Left lung (tissue), 14 donors: ENCODE measurements at regions of chr6 and their contacts with region 1.

Region 1: GRCh38 chr6:42043787-42044475 is 6.4 kb upstream of the TAF8 start:
- DNase-seq: peak; percentile 77 to 94 (median 90)
- ATAC-seq: peak; percentile 77
- H3K4me3 ChIP-seq: peak overlapping the region in 1 of 2 donors; percentile 21
- H3K27ac ChIP-seq: peak overlapping the region; percentile 91 to 96
- H3K4me1 ChIP-seq: peaks cover 50 to 90% of the 10 kb centered on the region in 2 donors
- H3K27me3 ChIP-seq: no peaks in the 10 kb centered on the region
- CTCF ChIP-seq: peak; percentile 95 to 97

Region 2: GRCh38 chr6:41779793-41780545 is 264.0 kb before region 1 on chr6 and contains the start of gene FRS3:
- intact Hi-C with region 1: loop called in 1 of 2 experiments (anchors 5 kb)
- DNase-seq: peak; percentile 97 to 100 (median 99)
- ATAC-seq: peak; percentile 90
- H3K4me3 ChIP-seq: peak within 1 kb of the TSS; percentile 58 to 83
- H3K27ac ChIP-seq: peak within 1 kb of the TSS; percentile 82 to 87
- H3K4me1 ChIP-seq: peaks cover 14 to 69% of the 10 kb centered on the region in 2 donors
- H3K27me3 ChIP-seq: no peaks in the 10 kb centered on the region
- CTCF ChIP-seq: peak; percentile 78 to 92
- polyA plus RNA-seq, gene FRS3: 8.0 to 10.9 (median 9.8) TPM

Region 3: DNA sequence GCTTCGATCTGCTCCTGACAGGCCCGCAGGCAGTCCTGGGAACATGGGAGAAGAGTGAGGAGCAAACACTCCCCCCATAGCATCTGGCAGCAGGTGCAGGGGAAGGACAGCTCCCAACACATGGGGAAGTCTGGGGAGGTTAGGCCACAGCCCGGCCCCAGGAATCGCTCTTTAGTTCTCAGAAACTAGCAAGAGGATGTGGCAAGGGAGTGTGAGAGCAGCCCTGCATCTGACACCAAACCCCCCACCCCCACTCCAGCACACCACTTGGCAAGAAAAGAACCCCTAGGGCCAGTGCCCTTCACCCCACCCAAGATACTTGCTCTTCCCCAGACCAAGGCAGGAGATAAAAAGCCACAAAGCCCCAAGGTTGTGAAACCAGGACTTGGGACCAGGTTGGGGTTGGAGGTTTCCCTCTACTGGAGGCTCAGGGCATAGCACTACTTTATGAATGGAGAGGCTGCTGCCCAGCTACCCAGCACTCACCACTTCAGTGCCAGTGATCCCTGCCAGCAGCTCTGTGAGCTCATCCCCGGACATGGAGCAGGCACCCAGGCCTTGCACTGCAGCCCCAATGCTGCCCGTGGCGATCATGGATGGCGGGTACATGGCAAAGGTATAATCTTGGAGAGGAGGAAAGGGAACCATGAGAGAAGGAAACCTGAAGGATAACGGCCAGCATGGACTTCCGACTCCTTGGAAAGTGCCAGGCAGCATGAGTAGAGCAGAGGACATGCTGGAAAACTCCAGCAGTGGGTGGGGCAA is 107.7 kb before region 1 on chr6:
- intact Hi-C with region 1: loop called in 1 of 2 experiments (anchors 5 kb)
- DNase-seq: peak; percentile 37 to 80 (median 69)
- ATAC-seq: peak; percentile 76
- H3K4me3 ChIP-seq: peak overlapping the region in 1 of 2 donors; percentile 99
- H3K27ac ChIP-seq: peak overlapping the region in 1 of 2 donors; percentile 94
- H3K4me1 ChIP-seq: peaks cover 40 to 64% of the 10 kb centered on the region in 2 donors
- H3K27me3 ChIP-seq: no peaks in the 10 kb centered on the region
- CTCF ChIP-seq: peak; percentile 85 to 87